Panc1 (cell line): ENCODE measurements at regions of chr4 and their contacts with region 1.

Region 1: GRCh38 chr4:173684223-173684622 is 154.2 kb upstream of the HAND2 start:
- DNase-seq: no peak
- ATAC-seq: no peak
- H3K4me3 ChIP-seq: no peak overlapping the region
- H3K27ac ChIP-seq: no peak overlapping the region
- H3K4me1 ChIP-seq: no peaks in the 10 kb centered on the region
- H3K27me3 ChIP-seq: no peaks in the 10 kb centered on the region
- CTCF ChIP-seq: no peak

Region 2: DNA sequence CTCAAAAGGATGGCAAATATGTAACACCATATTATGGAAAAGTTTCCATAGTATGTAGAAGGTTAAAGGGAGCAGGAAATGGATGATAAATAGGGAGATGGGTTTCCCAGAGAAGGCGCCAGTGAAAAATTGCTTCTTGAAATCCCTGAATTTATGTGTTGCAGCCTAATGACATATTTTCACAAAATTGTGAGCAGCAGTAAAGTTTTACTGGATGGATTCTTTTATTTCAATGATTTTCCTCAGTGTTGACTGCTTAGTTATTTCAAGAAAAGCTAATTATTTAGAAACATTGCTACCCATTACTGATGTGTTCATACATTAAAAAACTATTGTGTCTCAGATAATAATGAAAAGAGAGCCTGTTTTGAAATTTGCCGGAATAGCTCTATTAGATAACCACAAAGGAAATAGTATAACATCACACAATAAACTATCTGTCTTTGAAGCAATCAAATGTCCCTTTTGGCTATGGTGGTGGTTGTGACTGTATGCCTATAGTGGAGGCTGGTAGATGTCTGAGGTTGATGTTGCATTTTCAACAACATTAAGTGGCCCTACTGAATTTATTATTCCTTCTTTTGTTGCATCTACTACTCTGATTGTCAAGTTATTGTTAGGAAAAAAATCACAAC is 15.7 kb after region 1 on chr4:
- CTCF ChIA-PET with region 1: no interaction called
- POLR2A ChIA-PET with region 1: no interaction called
- in situ Hi-C with region 1: no loop called
- intact Hi-C with region 1: loop called (anchors 1 kb)
- DNase-seq: no peak
- ATAC-seq: no peak
- H3K4me3 ChIP-seq: no peak overlapping the region
- H3K27ac ChIP-seq: no peak overlapping the region
- H3K4me1 ChIP-seq: no peaks in the 10 kb centered on the region
- H3K27me3 ChIP-seq: no peaks in the 10 kb centered on the region
- CTCF ChIP-seq: no peak

Region 3: DNA sequence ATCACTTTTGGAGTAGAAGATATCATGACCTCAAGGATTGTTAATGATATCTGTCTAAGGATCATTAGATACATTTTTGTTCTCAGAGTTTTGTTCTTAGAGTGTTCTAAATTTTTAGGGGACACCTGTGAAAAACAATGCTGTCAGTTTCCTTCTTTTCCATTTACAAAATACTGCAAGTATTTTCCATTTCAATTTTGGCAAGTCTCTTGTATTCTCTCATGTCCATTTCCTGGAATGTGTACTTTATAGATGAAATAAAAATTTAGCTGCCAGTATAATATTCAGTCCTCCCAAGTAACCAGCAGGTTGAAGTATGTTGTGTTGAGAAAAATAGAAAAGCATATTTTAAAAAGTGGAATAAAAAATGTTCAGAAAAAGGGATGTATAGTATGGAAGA is 955.9 kb after region 1 on chr4:
- CTCF ChIA-PET with region 1: no interaction called
- POLR2A ChIA-PET with region 1: no interaction called
- in situ Hi-C with region 1: no loop called
- intact Hi-C with region 1: no loop called
- DNase-seq: no peak
- ATAC-seq: no peak
- H3K4me3 ChIP-seq: no peak overlapping the region
- H3K27ac ChIP-seq: no peak overlapping the region
- H3K4me1 ChIP-seq: no peaks in the 10 kb centered on the region
- H3K27me3 ChIP-seq: no peaks in the 10 kb centered on the region
- CTCF ChIP-seq: no peak